Activated CD4-positive, alpha-beta memory T cell treated with anti-CD3 and anti-CD28 coated beads for 36 hours (primary cell): ENCODE measurements at regions of chr6 and their contacts with region 1.

Region 1: DNA sequence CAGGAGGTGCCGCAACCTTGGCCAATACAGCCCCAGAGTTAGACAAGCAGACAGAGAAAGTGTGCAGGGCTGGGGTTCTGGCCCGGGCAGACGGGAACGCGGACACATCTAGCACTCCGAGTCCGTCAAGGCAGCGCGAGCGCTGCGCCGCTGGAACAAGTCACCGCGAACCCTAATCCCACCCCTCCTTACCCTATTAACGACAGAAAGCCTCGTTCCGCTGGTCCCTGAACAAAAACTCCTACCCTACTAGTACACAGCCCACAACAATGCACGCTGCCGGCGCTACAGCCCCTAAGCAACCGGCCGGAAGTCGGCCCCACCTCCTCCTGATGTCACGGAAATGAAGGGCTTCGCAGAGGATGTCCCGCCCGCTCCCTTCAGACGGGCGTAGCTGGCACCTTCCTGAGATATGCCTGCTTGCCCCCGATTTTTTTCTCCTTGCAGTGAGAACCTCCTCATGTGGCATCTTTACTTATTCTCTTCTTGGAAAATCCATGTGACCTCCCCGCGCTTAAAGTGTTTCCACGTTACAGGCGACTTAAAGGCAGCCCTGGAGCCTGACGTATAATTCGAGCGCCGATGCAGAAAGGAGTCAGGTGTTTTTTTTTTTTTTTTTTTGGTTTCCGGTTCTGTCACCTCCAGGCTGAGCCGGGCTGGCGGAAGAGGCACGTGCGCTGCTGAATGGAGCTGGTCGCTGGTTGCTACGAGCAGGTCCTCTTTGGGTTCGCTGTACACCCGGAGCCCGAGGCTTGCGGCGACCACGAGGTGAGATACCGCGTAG is at the starts of genes C6orf52 and PAK1IP1:
- DNase-seq: peak; percentile 95
- H3K4me3 Mint-ChIP-seq: peak within 1 kb of the TSS; percentile 93
- H3K27ac Mint-ChIP-seq: peak within 1 kb of the TSS; percentile 99
- H3K4me1 Mint-ChIP-seq: peaks cover 32% of the 10 kb centered on the region
- H3K27me3 Mint-ChIP-seq: no peaks in the 10 kb centered on the region
- total RNA-seq, gene C6orf52: 2.4 to 3.7 TPM
- total RNA-seq, gene PAK1IP1: 28.2 to 32.8 TPM

Region 2: GRCh38 chr6:10316327-10316726 is 378.2 kb before region 1 on chr6:
- CTCF ChIA-PET with region 1: no interaction called
- POLR2A ChIA-PET with region 1: no interaction called
- intact Hi-C with region 1: no loop called
- DNase-seq: no peak
- H3K4me3 Mint-ChIP-seq: no peak overlapping the region
- H3K27ac Mint-ChIP-seq: no peak overlapping the region
- H3K4me1 Mint-ChIP-seq: no peaks in the 10 kb centered on the region
- H3K27me3 Mint-ChIP-seq: peaks cover 1% of the 10 kb centered on the region

Region 3: DNA sequence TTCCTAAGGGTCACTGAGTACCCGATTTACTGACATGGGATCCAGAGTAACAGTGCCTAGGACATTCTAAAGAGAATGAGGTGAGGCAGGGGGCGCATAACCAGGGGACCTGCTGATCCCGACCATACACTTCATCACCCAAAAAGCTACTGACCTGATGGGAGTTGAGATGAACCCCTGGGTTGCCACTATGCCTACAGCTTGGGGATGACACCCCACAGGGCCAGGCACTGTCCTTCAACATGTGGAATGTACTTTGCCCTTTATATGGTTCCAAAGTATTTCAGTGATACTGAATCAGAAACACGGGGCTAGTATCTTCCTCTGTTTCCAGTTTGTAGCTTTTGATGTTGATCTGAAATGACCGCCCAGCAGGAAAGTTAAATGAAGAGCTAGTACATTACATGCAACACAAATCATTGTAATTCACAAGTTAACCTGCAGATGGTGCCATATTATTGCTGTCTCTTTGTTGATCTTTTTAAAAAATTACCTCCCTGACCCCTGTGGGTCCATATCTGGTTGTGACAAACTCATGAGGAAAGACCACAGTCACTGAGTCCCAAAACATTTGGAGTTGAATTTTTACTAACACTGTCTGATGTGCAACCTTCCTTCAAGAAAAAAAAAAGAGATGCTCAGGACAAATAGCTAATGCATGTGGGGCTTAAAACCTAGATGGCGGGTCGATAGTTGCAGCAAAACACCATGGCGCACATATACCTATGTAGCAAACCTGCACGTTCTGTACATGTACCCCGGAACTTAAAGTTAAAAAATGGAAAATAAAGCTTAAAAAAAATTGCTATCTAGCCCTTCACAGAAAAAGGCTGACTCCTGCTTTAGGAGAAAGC is 216.1 kb before region 1 on chr6:
- CTCF ChIA-PET with region 1: interaction called, 10 read pairs
- POLR2A ChIA-PET with region 1: no interaction called
- intact Hi-C with region 1: no loop called
- DNase-seq: no peak
- H3K4me3 Mint-ChIP-seq: no peak overlapping the region
- H3K27ac Mint-ChIP-seq: no peak overlapping the region
- H3K4me1 Mint-ChIP-seq: no peaks in the 10 kb centered on the region
- H3K27me3 Mint-ChIP-seq: peaks cover 9% of the 10 kb centered on the region

Region 4: DNA sequence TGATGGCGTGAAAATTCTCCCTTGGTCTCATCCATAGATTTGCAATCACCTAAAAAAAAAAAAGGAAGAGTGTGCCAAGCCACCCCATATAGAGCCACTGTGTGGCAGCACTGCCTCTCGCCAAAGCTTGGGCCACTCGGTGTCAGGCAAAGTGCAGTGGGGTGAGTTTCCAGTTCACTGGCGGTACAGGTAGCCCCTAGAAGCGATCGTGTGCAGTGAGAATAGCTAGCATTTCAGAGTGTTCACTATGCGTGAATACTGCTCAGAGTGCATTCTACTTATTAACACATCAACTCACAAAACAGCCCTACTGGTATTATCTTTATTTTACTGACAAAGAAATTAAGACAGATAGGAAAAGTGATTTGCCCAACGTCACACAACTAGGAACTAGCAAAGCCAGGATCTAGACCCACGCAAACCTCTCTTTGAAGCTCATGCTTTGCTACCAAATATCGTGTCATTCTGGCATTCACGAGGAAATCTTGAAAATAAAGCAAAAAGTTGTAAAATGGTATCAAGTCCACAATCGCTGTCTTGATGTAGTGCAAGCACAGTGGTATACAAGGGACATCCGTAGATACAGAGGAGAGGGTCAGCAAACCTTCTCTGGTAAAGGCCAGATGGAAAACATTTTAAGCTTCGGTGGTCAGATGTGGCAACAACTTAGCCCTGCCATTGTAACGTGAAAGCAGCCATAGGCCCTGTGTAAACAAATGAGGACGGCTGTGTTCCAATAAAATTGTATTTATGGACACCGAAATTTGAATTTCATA is 183.7 kb before region 1 on chr6:
- CTCF ChIA-PET with region 1: interaction called, 5 read pairs
- POLR2A ChIA-PET with region 1: no interaction called
- intact Hi-C with region 1: loop called (anchors 2 kb)
- DNase-seq: peak; percentile 62
- H3K4me3 Mint-ChIP-seq: no peak overlapping the region
- H3K27ac Mint-ChIP-seq: no peak overlapping the region
- H3K4me1 Mint-ChIP-seq: peaks cover 4% of the 10 kb centered on the region
- H3K27me3 Mint-ChIP-seq: peaks cover 6% of the 10 kb centered on the region

Region 5: GRCh38 chr6:10528170-10528981 is 166.1 kb before region 1 on chr6:
- CTCF ChIA-PET with region 1: no interaction called
- POLR2A ChIA-PET with region 1: interaction called, 7 read pairs
- intact Hi-C with region 1: loop called (anchors 1 kb)
- DNase-seq: peak; percentile 37
- H3K4me3 Mint-ChIP-seq: peak overlapping the region; percentile 73
- H3K27ac Mint-ChIP-seq: peak overlapping the region; percentile 61
- H3K4me1 Mint-ChIP-seq: peaks cover 47% of the 10 kb centered on the region
- H3K27me3 Mint-ChIP-seq: no peaks in the 10 kb centered on the region

Region 6: GRCh38 chr6:10655508-10656055 is 38.9 kb before region 1 on chr6:
- CTCF ChIA-PET with region 1: no interaction called
- POLR2A ChIA-PET with region 1: no interaction called
- intact Hi-C with region 1: no loop called
- DNase-seq: peak; percentile 34
- H3K4me3 Mint-ChIP-seq: no peak overlapping the region
- H3K27ac Mint-ChIP-seq: no peak overlapping the region
- H3K4me1 Mint-ChIP-seq: peaks cover 9% of the 10 kb centered on the region
- H3K27me3 Mint-ChIP-seq: peaks cover 11% of the 10 kb centered on the region

Region 7: GRCh38 chr6:10722820-10723566 is 28.5 kb after region 1 on chr6 and contains the start of gene TMEM14C:
- CTCF ChIA-PET with region 1: interaction called, 15 read pairs
- POLR2A ChIA-PET with region 1: interaction called, 31 read pairs
- intact Hi-C with region 1: loop called (anchors 1 kb)
- DNase-seq: peak; percentile 95
- H3K4me3 Mint-ChIP-seq: peak within 1 kb of the TSS; percentile 84
- H3K27ac Mint-ChIP-seq: peak within 1 kb of the TSS; percentile 82
- H3K4me1 Mint-ChIP-seq: peaks cover 34% of the 10 kb centered on the region
- H3K27me3 Mint-ChIP-seq: no peaks in the 10 kb centered on the region
- total RNA-seq, gene TMEM14C: 84.9 to 87.6 TPM

Region 8: GRCh38 chr6:10747251-10747972 is 52.9 kb after region 1 on chr6 and contains the start of gene TMEM14B:
- CTCF ChIA-PET with region 1: no interaction called
- POLR2A ChIA-PET with region 1: interaction called, 8 read pairs
- intact Hi-C with region 1: loop called (anchors 1 kb)
- DNase-seq: peak; percentile 100
- H3K4me3 Mint-ChIP-seq: peak within 1 kb of the TSS; percentile 88
- H3K27ac Mint-ChIP-seq: peak within 1 kb of the TSS; percentile 86
- H3K4me1 Mint-ChIP-seq: peaks cover 47% of the 10 kb centered on the region
- H3K27me3 Mint-ChIP-seq: no peaks in the 10 kb centered on the region
- total RNA-seq, gene TMEM14B: 86.9 to 91.3 TPM

Region 9: DNA sequence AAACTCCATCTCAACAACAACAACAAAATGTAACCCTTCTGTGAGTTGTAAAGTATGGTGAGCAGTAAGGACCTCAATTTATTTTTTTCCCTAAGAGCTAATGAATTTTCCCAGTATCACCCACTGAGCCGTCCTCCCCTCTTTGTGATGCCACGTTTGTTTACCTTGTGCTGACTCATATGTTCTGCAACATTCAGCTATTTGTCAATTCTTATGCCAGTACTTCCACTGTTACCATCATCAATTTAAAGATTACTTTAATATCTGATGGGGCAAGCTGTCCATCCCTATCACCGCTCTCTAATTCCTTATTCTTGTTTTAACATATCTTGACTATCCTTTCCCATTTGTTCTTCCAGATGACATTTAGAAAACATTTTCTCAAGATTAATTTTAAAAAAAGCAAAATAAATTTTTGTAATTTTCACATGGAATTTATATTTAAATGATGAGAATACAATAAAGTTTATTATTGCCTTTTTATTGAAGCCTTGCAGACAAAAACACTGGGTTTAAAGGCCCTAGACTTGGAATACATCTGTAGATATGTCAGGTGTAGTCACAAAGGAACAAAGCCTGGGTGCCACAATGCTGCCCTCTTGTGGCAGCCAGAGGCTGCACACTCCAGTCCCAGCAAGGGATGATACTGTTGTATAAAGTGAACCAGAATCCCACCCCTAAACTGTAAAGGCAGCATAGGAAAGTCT is 106.5 kb after region 1 on chr6:
- CTCF ChIA-PET with region 1: no interaction called
- POLR2A ChIA-PET with region 1: no interaction called
- intact Hi-C with region 1: loop called (anchors 5 kb)
- DNase-seq: peak; percentile 75
- H3K4me3 Mint-ChIP-seq: no peak overlapping the region
- H3K27ac Mint-ChIP-seq: no peak overlapping the region
- H3K4me1 Mint-ChIP-seq: no peaks in the 10 kb centered on the region
- H3K27me3 Mint-ChIP-seq: no peaks in the 10 kb centered on the region

Region 10: DNA sequence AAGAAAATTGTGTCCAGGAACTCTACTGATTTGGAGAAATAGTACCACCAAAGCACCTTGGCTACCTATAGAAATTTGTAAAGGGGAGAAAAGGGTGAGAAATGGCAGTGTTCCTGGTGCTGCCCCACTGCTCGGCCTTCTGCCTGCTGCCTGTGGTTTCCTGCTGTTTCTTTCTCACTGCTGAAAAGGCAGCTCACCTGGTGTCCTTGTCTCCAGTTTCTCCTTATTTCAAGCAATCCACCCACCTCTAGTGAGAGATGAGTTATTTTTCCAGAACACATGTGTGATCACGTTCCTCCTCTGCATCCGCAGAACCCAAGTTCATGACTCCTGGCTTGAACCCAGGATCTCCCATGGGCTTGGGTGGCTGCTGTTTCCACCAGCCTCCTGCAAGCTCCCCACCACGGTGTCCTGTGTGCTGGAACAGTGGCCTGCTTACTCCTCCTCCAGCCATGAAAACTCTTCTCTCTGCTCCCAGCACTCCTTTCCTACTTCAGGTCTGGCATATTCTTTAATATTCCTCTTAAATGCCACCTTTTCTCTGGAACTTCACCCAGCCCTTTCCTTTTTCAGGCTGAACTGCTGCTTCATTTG is 300.7 kb after region 1 on chr6:
- CTCF ChIA-PET with region 1: no interaction called
- POLR2A ChIA-PET with region 1: no interaction called
- intact Hi-C with region 1: no loop called
- DNase-seq: no peak
- H3K4me3 Mint-ChIP-seq: no peak overlapping the region
- H3K27ac Mint-ChIP-seq: no peak overlapping the region
- H3K4me1 Mint-ChIP-seq: no peaks in the 10 kb centered on the region
- H3K27me3 Mint-ChIP-seq: peaks cover 4% of the 10 kb centered on the region